ENCODE measurements at regions of chr5 and their contacts with region 1.

Region 1: GRCh38 chr5:80754900-80755299 is 100.1 kb upstream of the DHFR start:
- DNase-seq: no peak
- H3K4me3 Mint-ChIP-seq: peak overlapping the region; percentile 49
- H3K27ac Mint-ChIP-seq: peak overlapping the region; percentile 91
- H3K4me1 Mint-ChIP-seq: peaks cover 62% of the 10 kb centered on the region
- H3K27me3 Mint-ChIP-seq: no peaks in the 10 kb centered on the region

Region 2: DNA sequence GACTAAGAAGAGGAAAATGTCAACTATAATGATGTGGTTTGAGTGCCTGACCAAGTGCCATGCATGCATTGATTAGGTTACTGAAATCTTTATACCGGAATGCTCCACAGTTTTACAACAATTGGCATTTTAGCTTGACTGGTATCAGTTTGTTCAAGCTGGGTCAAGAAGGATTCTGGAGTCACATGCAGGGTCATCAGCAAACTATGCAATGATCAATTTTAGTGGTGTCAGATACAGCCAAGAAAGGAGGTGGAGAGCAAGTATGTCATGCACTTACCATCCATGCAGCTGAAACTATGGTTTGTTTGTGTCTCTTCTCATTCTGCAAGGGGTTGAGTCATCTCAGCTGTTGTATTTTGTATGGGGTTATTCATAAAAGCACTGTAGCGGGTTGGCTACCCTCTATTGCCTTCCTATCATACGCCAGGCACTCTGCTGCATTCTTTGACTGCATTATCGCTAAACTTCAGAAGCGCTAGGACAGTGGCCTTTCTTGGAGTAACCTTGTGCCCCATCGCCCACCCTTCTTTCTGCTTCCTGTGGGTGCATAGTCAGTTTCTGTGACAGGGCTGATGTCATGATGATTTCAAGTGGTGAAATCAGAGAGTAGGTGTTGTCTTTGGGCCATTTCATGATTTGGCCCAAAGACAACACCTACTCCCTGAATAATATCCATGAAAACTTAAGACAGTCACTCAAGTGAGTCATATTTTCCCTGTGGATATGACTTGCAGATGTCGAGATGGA is 909.3 kb before region 1 on chr5:
- intact Hi-C with region 1: loop called (anchors 5 kb)
- DNase-seq: peak; percentile 21
- H3K4me3 Mint-ChIP-seq: no peak overlapping the region
- H3K27ac Mint-ChIP-seq: peak overlapping the region; percentile 50
- H3K4me1 Mint-ChIP-seq: peaks cover 22% of the 10 kb centered on the region
- H3K27me3 Mint-ChIP-seq: peaks cover 4% of the 10 kb centered on the region

Region 3: GRCh38 chr5:80711938-80712337 is 43.0 kb before region 1 on chr5:
- intact Hi-C with region 1: no loop called
- DNase-seq: no peak
- H3K4me3 Mint-ChIP-seq: no peak overlapping the region
- H3K27ac Mint-ChIP-seq: no peak overlapping the region
- H3K4me1 Mint-ChIP-seq: peaks cover 18% of the 10 kb centered on the region
- H3K27me3 Mint-ChIP-seq: no peaks in the 10 kb centered on the region

Region 4: DNA sequence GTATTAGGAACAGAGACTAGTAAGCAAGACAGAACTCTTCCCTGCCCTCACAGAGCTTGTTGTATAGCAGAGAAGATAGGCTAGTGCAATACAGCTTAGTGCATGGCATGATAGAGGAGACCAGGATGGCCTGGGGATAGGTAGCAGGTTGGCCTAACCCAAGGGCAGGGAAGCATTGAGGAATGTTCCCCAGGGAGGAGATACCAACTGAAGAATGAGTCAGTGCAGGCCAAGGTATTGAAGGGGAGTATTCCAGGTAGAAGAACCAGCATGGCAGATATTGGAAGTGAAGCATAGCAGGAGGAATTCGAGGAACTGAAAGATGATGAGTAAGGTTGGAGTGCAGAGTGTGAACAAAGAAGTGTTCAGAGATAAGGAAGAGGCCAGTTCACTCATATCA is 38.5 kb after region 1 on chr5:
- intact Hi-C with region 1: loop called (anchors 1 kb)
- DNase-seq: no peak
- H3K4me3 Mint-ChIP-seq: no peak overlapping the region
- H3K27ac Mint-ChIP-seq: no peak overlapping the region
- H3K4me1 Mint-ChIP-seq: peaks cover 11% of the 10 kb centered on the region
- H3K27me3 Mint-ChIP-seq: no peaks in the 10 kb centered on the region

Region 5: DNA sequence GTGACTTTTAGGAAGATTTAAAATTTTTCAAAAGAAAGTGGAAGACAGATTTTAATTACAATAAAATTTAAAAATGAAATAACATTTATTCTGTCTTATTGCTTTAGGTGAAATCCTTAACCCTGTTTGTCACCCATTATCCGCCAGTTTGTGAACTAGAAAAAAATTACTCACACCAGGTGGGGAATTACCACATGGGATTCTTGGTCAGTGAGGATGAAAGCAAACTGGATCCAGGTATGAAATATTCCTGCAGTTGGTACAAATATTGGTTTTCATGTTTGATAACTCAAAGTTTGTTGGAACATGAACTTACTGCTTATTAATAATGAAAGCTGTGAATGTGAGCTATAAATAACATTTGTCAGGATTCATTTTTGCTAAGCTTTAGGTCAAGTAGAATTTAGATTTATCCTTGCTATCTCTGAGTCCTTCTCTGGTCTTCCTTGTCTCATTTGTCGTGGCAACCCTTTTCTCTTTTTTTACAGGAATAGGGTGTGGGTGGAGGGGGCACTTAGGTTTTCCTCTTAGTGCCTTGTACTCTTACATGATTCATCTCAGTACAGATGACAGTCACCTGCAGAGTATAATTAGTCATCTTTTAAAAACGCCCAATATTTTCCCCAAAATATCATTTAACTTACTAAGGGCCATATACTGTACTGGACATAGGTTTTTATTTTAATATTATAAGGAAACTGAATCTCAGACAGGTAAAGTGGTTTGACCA is 110.0 kb after region 1 on chr5:
- intact Hi-C with region 1: loop called (anchors 2 kb)
- DNase-seq: no peak
- H3K4me3 Mint-ChIP-seq: peak overlapping the region; percentile 27
- H3K27ac Mint-ChIP-seq: peak overlapping the region; percentile 34
- H3K4me1 Mint-ChIP-seq: peaks cover 60% of the 10 kb centered on the region
- H3K27me3 Mint-ChIP-seq: no peaks in the 10 kb centered on the region

Region 6: GRCh38 chr5:80871541-80871961 is 116.7 kb after region 1 on chr5:
- intact Hi-C with region 1: loop called (anchors 2 kb)
- DNase-seq: no peak
- H3K4me3 Mint-ChIP-seq: no peak overlapping the region
- H3K27ac Mint-ChIP-seq: peak overlapping the region; percentile 89
- H3K4me1 Mint-ChIP-seq: peaks cover 35% of the 10 kb centered on the region
- H3K27me3 Mint-ChIP-seq: no peaks in the 10 kb centered on the region

Region 7: GRCh38 chr5:81006947-81007636 is 252.2 kb after region 1 on chr5:
- intact Hi-C with region 1: loop called (anchors 2 kb)
- DNase-seq: peak; percentile 40
- H3K4me3 Mint-ChIP-seq: peak overlapping the region; percentile 73
- H3K27ac Mint-ChIP-seq: peak overlapping the region; percentile 90
- H3K4me1 Mint-ChIP-seq: peaks cover 46% of the 10 kb centered on the region
- H3K27me3 Mint-ChIP-seq: no peaks in the 10 kb centered on the region

Region 8: GRCh38 chr5:81014348-81014747 is 259.4 kb after region 1 on chr5:
- intact Hi-C with region 1: loop called (anchors 2 kb)
- DNase-seq: no peak
- H3K4me3 Mint-ChIP-seq: no peak overlapping the region
- H3K27ac Mint-ChIP-seq: no peak overlapping the region
- H3K4me1 Mint-ChIP-seq: peaks cover 45% of the 10 kb centered on the region
- H3K27me3 Mint-ChIP-seq: no peaks in the 10 kb centered on the region

Measured in activated T-helper 2 cell treated with anti-CD3 and anti-CD28 coated beads, Interferon-gamma antibody, Interleukin-2, Interleukin-4, amounts not matched to agents 10 μg/mL and 5 μg/mL and 100 μg/mL, durations not matched to agents 14 hours and 24 hours and 36 hours (primary cell).